Mammary epithelial cell (primary cell): ENCODE measurements at regions of chr16 and their contacts with region 1.

Region 1: DNA sequence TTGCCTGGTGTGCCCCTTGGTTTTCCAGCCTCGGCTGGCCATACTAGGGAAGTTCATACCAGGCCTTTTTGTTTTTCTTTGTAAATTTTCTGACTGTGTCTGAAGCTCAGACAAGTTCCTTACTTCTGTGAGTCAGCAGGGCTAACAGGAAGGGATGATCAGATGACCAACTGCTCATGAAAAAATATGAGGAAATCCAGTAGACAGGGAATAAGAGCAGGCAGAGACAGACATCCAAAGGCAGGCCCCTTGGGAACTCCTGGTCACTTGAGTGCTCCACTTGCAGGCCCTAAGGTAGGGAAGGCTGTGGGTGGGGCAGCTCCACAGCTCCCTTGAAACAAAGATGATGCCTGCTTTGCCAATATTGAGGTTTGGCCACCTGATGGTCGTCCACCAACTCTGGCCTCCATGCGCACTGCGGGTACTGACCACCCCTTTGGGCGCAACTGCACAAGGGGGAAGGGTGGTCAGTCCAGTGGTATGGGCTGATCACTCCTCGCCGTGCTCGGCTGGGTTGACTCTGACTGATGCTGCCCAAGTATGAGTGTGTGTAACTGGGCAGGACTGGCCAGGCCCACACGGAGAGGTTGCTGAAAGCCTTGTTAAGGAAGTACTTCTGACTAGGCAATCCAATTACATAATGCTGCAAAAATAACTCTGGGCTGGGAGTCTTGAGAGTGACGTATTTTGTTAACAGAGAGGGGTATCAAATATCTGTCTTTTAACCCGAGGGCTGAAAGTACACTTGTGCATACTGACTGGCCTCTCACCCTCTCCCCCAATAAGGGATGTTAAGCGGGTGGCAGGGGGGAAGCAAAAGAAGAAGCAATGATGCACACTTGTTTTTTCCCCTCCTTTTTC is 20.8 kb upstream of the ZFHX3 start:
- DNase-seq: peak; percentile 85
- H3K4me3 ChIP-seq: no peak overlapping the region
- H3K27ac ChIP-seq: peak overlapping the region; percentile 54
- H3K4me1 ChIP-seq: peaks cover 48% of the 10 kb centered on the region
- H3K27me3 ChIP-seq: no peaks in the 10 kb centered on the region
- CTCF ChIP-seq: no peak

Region 2: GRCh38 chr16:72995151-72995881 is 73.5 kb before region 1 on chr16:
- CTCF ChIA-PET with region 1: no interaction called
- dilution Hi-C with region 1: no loop called
- in situ Hi-C with region 1: no loop called
- intact Hi-C with region 1: no loop called
- DNase-seq: no peak
- H3K4me3 ChIP-seq: no peak overlapping the region
- H3K27ac ChIP-seq: no peak overlapping the region
- H3K4me1 ChIP-seq: peaks cover 25% of the 10 kb centered on the region
- H3K27me3 ChIP-seq: no peaks in the 10 kb centered on the region
- CTCF ChIP-seq: peak; percentile 35 to 36

Region 3: GRCh38 chr16:73058221-73058615 is 10.6 kb before region 1 on chr16:
- CTCF ChIA-PET with region 1: no interaction called
- dilution Hi-C with region 1: no loop called
- in situ Hi-C with region 1: no loop called
- intact Hi-C with region 1: no loop called
- DNase-seq: peak; percentile 54
- H3K4me3 ChIP-seq: peak overlapping the region; percentile 55 to 64 (median 61)
- H3K27ac ChIP-seq: no peak overlapping the region
- H3K4me1 ChIP-seq: peaks cover 47% of the 10 kb centered on the region
- H3K27me3 ChIP-seq: no peaks in the 10 kb centered on the region
- CTCF ChIP-seq: no peak

Region 4: DNA sequence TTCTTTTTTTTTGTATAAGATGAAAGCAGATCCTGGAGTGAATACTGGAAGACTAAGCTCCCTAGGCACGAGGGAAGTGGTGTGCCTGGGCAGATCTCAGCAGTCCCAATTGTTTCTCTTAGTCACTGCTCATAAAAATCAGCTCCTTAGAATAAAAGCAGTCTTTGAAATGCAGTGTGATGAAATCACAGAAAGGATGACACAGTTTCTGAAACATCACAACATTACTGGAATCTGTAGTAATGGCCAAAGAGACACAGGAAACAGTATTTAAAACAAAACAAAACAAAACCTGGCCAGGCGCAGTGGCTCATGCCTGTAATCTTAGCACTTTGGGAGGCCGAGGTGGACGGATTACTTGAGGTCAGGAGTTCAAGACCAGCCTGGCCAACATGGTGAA is 13.8 kb after region 1 on chr16:
- CTCF ChIA-PET with region 1: no interaction called
- dilution Hi-C with region 1: no loop called
- in situ Hi-C with region 1: no loop called
- intact Hi-C with region 1: loop called (anchors 1 kb)
- DNase-seq: peak; percentile 98
- H3K4me3 ChIP-seq: no peak overlapping the region
- H3K27ac ChIP-seq: peak overlapping the region; percentile 84
- H3K4me1 ChIP-seq: peaks cover 4% of the 10 kb centered on the region
- H3K27me3 ChIP-seq: no peaks in the 10 kb centered on the region
- CTCF ChIP-seq: no peak